ENCODE measurements at regions of chr1 and their contacts with region 1.

Region 1: GRCh38 chr1:67500413-67500959 is 70.3 kb upstream of the SERBP1 start:
- DNase-seq: peak; percentile 68 to 92 (median 88)
- ATAC-seq: peak; percentile 99 to 100 (median 100)
- H3K4me3 ChIP-seq: no peak overlapping the region
- H3K27ac ChIP-seq: no peak overlapping the region
- H3K4me1 ChIP-seq: no peaks in the 10 kb centered on the region
- H3K27me3 ChIP-seq: no peaks in the 10 kb centered on the region
- CTCF ChIP-seq: peak; percentile 97 to 98 (median 97)

Region 2: GRCh38 chr1:67239738-67240137 is 260.7 kb before region 1 on chr1:
- intact Hi-C with region 1: loop called in 2 of 3 experiments (anchors 5 to 10 kb)
- DNase-seq: no peak
- ATAC-seq: no peak
- H3K4me3 ChIP-seq: no peak overlapping the region
- H3K27ac ChIP-seq: no peak overlapping the region
- H3K4me1 ChIP-seq: no peaks in the 10 kb centered on the region
- H3K27me3 ChIP-seq: no peaks in the 10 kb centered on the region
- CTCF ChIP-seq: no peak

Region 3: GRCh38 chr1:67347688-67348472 is 152.6 kb before region 1 on chr1:
- intact Hi-C with region 1: loop called in 2 of 3 experiments (anchors 5 to 10 kb)
- DNase-seq: peak in 3 of 6 donors; percentile 6 to 42 (median 16)
- ATAC-seq: peak in 3 of 4 donors; percentile 78 to 85 (median 81)
- H3K4me3 ChIP-seq: no peak overlapping the region
- H3K27ac ChIP-seq: no peak overlapping the region
- H3K4me1 ChIP-seq: no peaks in the 10 kb centered on the region
- H3K27me3 ChIP-seq: no peaks in the 10 kb centered on the region
- CTCF ChIP-seq: peak; percentile 14 to 52 (median 43)